Endothelial cell of umbilical vein (primary cell): ENCODE measurements at regions of chr5 and their contacts with region 1.

Region 1: GRCh38 chr5:149667084-149667828 is 62.9 kb upstream of the PPARGC1B start:
- DNase-seq: peak; percentile 42
- H3K4me3 ChIP-seq: no peak overlapping the region
- H3K27ac ChIP-seq: no peak overlapping the region
- H3K4me1 ChIP-seq: no peaks in the 10 kb centered on the region
- H3K27me3 ChIP-seq: peaks cover 3 to 4% of the 10 kb centered on the region in 2 experiments
- CTCF ChIP-seq: peak; percentile 78 to 89
- POLR2A ChIP-seq: no peak

Region 2: DNA sequence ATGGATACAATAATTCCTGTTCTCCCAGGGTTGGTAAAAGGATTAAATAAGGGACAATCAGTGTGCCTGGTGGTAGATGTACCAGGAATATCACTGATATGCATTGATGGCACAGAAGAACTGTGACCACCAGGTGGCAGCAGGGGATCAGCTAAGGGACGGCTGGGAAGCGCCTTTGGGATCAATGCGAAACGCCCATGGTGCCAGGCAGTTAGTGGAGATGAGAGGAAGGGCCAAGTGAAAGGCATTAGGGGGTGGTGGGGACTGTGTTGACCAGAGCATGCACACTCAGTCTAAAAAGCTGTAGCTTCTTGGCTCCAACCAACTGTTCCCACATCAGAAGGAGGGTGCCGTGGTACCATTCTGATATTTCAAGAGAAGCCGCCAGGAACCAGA is 30.4 kb before region 1 on chr5:
- CTCF ChIA-PET with region 1: interaction called, 48 read pairs
- POLR2A ChIA-PET with region 1: no interaction called
- dilution Hi-C with region 1: no loop called
- intact Hi-C with region 1: loop called (anchors 1 kb)
- DNase-seq: peak; percentile 57
- H3K4me3 ChIP-seq: no peak overlapping the region
- H3K27ac ChIP-seq: no peak overlapping the region
- H3K4me1 ChIP-seq: peaks cover 12% of the 10 kb centered on the region
- H3K27me3 ChIP-seq: no peaks in the 10 kb centered on the region
- CTCF ChIP-seq: peak; percentile 72 to 74
- POLR2A ChIP-seq: no peak

Region 3: GRCh38 chr5:149694007-149694406 is 26.8 kb after region 1 on chr5:
- CTCF ChIA-PET with region 1: interaction called, 18 read pairs
- POLR2A ChIA-PET with region 1: no interaction called
- dilution Hi-C with region 1: no loop called
- intact Hi-C with region 1: no loop called
- DNase-seq: no peak
- H3K4me3 ChIP-seq: no peak overlapping the region
- H3K27ac ChIP-seq: no peak overlapping the region
- H3K4me1 ChIP-seq: no peaks in the 10 kb centered on the region
- H3K27me3 ChIP-seq: peaks cover 25 to 40% of the 10 kb centered on the region in 2 experiments
- CTCF ChIP-seq: no peak
- POLR2A ChIP-seq: no peak

Region 4: GRCh38 chr5:149750596-149750995 is 83.3 kb after region 1 on chr5:
- CTCF ChIA-PET with region 1: interaction called, 11 read pairs
- POLR2A ChIA-PET with region 1: no interaction called
- dilution Hi-C with region 1: no loop called
- intact Hi-C with region 1: no loop called
- DNase-seq: no peak
- H3K4me3 ChIP-seq: no peak overlapping the region
- H3K27ac ChIP-seq: no peak overlapping the region
- H3K4me1 ChIP-seq: no peaks in the 10 kb centered on the region
- H3K27me3 ChIP-seq: no peaks in the 10 kb centered on the region
- CTCF ChIP-seq: no peak
- POLR2A ChIP-seq: no peak

Region 5: DNA sequence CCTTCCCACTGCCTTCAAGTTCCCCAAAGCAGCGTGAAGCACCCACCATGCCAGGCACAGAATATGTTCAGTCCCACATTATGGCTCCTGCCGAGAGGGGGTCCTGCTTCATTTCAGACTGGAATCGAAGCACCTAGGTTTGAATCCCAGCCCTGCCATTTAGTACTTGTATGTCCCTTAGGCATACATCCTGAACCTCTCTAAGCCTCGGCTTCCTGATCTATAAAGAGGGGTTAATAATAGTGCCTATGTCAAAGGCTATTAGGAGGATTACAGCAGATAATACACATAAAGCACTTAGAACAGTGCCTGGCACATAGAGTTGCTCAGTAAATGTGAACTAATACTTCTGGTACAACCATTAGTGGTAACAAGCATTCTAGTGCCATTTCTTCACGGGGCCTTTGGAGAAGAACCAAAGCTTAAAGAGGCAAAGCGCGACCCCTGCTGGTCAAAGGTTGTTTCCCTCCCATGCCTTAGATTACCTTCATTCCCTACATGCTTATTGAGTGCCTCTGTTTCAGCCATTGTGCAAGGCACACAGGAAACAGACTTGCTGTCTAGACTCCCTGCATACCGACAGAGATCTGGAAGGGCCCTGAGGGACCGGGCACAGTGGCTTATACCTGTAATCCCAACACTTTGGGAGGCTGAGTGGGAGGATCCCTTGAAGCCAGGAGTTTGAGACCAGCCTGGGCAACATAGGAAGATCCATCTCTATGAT is 161.1 kb after region 1 on chr5:
- CTCF ChIA-PET with region 1: interaction called, 240 read pairs
- POLR2A ChIA-PET with region 1: no interaction called
- dilution Hi-C with region 1: no loop called
- intact Hi-C with region 1: loop called (anchors 1 kb)
- DNase-seq: peak; percentile 89
- H3K4me3 ChIP-seq: no peak overlapping the region
- H3K27ac ChIP-seq: no peak overlapping the region
- H3K4me1 ChIP-seq: no peaks in the 10 kb centered on the region
- H3K27me3 ChIP-seq: no peaks in the 10 kb centered on the region
- CTCF ChIP-seq: peak; percentile 83 to 92
- POLR2A ChIP-seq: no peak

Region 6: GRCh38 chr5:149960272-149961185 is 293.3 kb after region 1 on chr5 and contains the start of gene SLC26A2:
- CTCF ChIA-PET with region 1: interaction called, 18 read pairs
- POLR2A ChIA-PET with region 1: no interaction called
- dilution Hi-C with region 1: no loop called
- intact Hi-C with region 1: no loop called
- DNase-seq: peak; percentile 98
- H3K4me3 ChIP-seq: peak within 1 kb of the TSS; percentile 71 to 76 (median 74)
- H3K27ac ChIP-seq: peak within 1 kb of the TSS; percentile 85
- H3K4me1 ChIP-seq: peaks cover 21% of the 10 kb centered on the region
- H3K27me3 ChIP-seq: no peaks in the 10 kb centered on the region
- CTCF ChIP-seq: no peak
- POLR2A ChIP-seq: peak; percentile 88
- total RNA-seq, gene SLC26A2: 16.5 and 16.8 TPM in 2 replicates